Ascending aorta (tissue), 2 donors: ENCODE measurements at regions of chr18 and their contacts with region 1.

Region 1: GRCh38 chr18:61949946-61950345 is 57.1 kb upstream of the RNF152 start:
- DNase-seq: peak in 1 of 2 donors; percentile 80
- H3K4me3 ChIP-seq: peak overlapping the region in 1 of 2 donors; percentile 49
- H3K27ac ChIP-seq: peak overlapping the region; percentile 42 to 52
- H3K4me1 ChIP-seq: peaks cover 0 to 27% of the 10 kb centered on the region in 2 donors
- H3K27me3 ChIP-seq: no peaks in the 10 kb centered on the region
- CTCF ChIP-seq: no peak

Region 2: DNA sequence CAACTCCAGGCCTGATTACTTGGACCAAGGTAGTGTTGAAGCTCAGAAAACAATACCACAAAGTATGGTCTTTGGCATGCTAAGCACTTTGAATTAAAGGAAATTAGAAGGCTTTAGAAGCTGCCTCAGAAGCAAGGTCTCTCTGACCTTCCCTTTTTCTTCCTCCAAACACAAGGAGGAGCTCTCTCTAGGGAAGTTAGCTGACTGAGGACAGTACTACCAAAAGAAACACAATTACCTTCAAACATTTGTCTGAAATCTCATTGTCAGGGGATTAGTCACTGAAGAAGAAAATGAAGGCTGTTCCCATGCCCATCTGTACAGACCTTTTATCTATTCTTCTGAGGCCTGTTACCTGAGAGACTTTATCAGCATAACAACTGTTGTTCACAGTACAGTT is 337.4 kb before region 1 on chr18:
- intact Hi-C with region 1: no loop called
- DNase-seq: no peak
- H3K4me3 ChIP-seq: no peak overlapping the region
- H3K27ac ChIP-seq: no peak overlapping the region
- H3K4me1 ChIP-seq: peaks cover 0 to 2% of the 10 kb centered on the region in 2 donors
- H3K27me3 ChIP-seq: no peaks in the 10 kb centered on the region
- CTCF ChIP-seq: peak in 1 of 3 experiments; percentile 24

Region 3: GRCh38 chr18:61738488-61738887 is 211.5 kb before region 1 on chr18:
- intact Hi-C with region 1: loop called (anchors 5 kb)
- DNase-seq: peak in 1 of 2 donors; percentile 79
- H3K4me3 ChIP-seq: no peak overlapping the region
- H3K27ac ChIP-seq: peak overlapping the region; percentile 76 to 89
- H3K4me1 ChIP-seq: peaks cover 15 to 36% of the 10 kb centered on the region in 2 donors
- H3K27me3 ChIP-seq: no peaks in the 10 kb centered on the region
- CTCF ChIP-seq: no peak

Region 4: GRCh38 chr18:61963705-61964104 is 13.8 kb after region 1 on chr18:
- intact Hi-C with region 1: loop called (anchors 2 kb)
- DNase-seq: no peak
- H3K4me3 ChIP-seq: no peak overlapping the region
- H3K27ac ChIP-seq: peak overlapping the region; percentile 31 to 77
- H3K4me1 ChIP-seq: peaks cover 14 to 17% of the 10 kb centered on the region in 2 donors
- H3K27me3 ChIP-seq: no peaks in the 10 kb centered on the region
- CTCF ChIP-seq: no peak

Region 5: GRCh38 chr18:61998957-61999356 is 49.0 kb after region 1 on chr18:
- intact Hi-C with region 1: loop called (anchors 5 kb)
- DNase-seq: no peak
- H3K4me3 ChIP-seq: no peak overlapping the region
- H3K27ac ChIP-seq: peak overlapping the region; percentile 34 to 54
- H3K4me1 ChIP-seq: no peaks in the 10 kb centered on the region
- H3K27me3 ChIP-seq: no peaks in the 10 kb centered on the region
- CTCF ChIP-seq: no peak